ENCODE measurements at regions of chr4 and their contacts with region 1.

Region 1: GRCh38 chr4:47463235-47463956 is at the start of gene COMMD8:
- DNase-seq: peak; percentile 96 to 98 (median 97)
- H3K4me3 ChIP-seq: peak within 1 kb of the TSS; percentile 48 to 92
- H3K4me3 Mint-ChIP-seq: peak within 1 kb of the TSS; percentile 88 to 92 (median 90)
- H3K27ac ChIP-seq: peak within 1 kb of the TSS; percentile 79
- H3K27ac Mint-ChIP-seq: peak within 1 kb of the TSS; percentile 90 to 99 (median 96)
- H3K4me1 ChIP-seq: peaks cover 24% of the 10 kb centered on the region
- H3K4me1 Mint-ChIP-seq: peaks cover 26 to 42% (median 36%) of the 10 kb centered on the region in 4 donors
- H3K27me3 ChIP-seq: no peaks in the 10 kb centered on the region
- H3K27me3 Mint-ChIP-seq: peaks cover 0 to 2% of the 10 kb centered on the region in 2 donors
- total RNA-seq, gene COMMD8: 14.6 to 18.3 TPM

Region 2: GRCh38 chr4:47349326-47349725 is 114.1 kb before region 1 on chr4:
- CTCF ChIA-PET with region 1: no interaction called
- POLR2A ChIA-PET with region 1: no interaction called
- intact Hi-C with region 1: no loop called
- DNase-seq: no peak
- H3K4me3 ChIP-seq: no peak overlapping the region
- H3K4me3 Mint-ChIP-seq: no peak overlapping the region
- H3K27ac ChIP-seq: no peak overlapping the region
- H3K27ac Mint-ChIP-seq: no peak overlapping the region
- H3K4me1 ChIP-seq: no peaks in the 10 kb centered on the region
- H3K4me1 Mint-ChIP-seq: no peaks in the 10 kb centered on the region
- H3K27me3 ChIP-seq: no peaks in the 10 kb centered on the region
- H3K27me3 Mint-ChIP-seq: peaks cover 3 to 11% of the 10 kb centered on the region in 2 donors

Region 3: GRCh38 chr4:47485047-47485692 is 21.8 kb after region 1 on chr4 and contains the start of gene ATP10D:
- CTCF ChIA-PET with region 1: interaction called, 19 read pairs
- POLR2A ChIA-PET with region 1: interaction called, 21 read pairs
- intact Hi-C with region 1: loop called (anchors 1 kb)
- DNase-seq: peak; percentile 65 to 75 (median 67)
- H3K4me3 ChIP-seq: peak within 1 kb of the TSS; percentile 58 to 86
- H3K4me3 Mint-ChIP-seq: peak within 1 kb of the TSS; percentile 90 to 99 (median 95)
- H3K27ac ChIP-seq: peak within 1 kb of the TSS; percentile 46
- H3K27ac Mint-ChIP-seq: peak within 1 kb of the TSS; percentile 74 to 98 (median 94)
- H3K4me1 ChIP-seq: peaks cover 14% of the 10 kb centered on the region
- H3K4me1 Mint-ChIP-seq: peaks cover 7 to 32% (median 25%) of the 10 kb centered on the region in 4 donors
- H3K27me3 ChIP-seq: no peaks in the 10 kb centered on the region
- H3K27me3 Mint-ChIP-seq: no peaks in the 10 kb centered on the region
- total RNA-seq, gene ATP10D: 3.1 to 4.2 TPM

Region 4: GRCh38 chr4:47531241-47531953 is 68.0 kb after region 1 on chr4:
- CTCF ChIA-PET with region 1: no interaction called
- POLR2A ChIA-PET with region 1: interaction called, 12 read pairs
- intact Hi-C with region 1: loop called (anchors 1 kb)
- DNase-seq: peak; percentile 50 to 70 (median 61)
- H3K4me3 ChIP-seq: no peak overlapping the region
- H3K4me3 Mint-ChIP-seq: peak overlapping the region in 7 of 8 donors; percentile 18 to 82 (median 72)
- H3K27ac ChIP-seq: no peak overlapping the region
- H3K27ac Mint-ChIP-seq: peak overlapping the region in 6 of 7 donors; percentile 56 to 88 (median 76)
- H3K4me1 ChIP-seq: peaks cover 40% of the 10 kb centered on the region
- H3K4me1 Mint-ChIP-seq: peaks cover 35 to 47% (median 43%) of the 10 kb centered on the region in 4 donors
- H3K27me3 ChIP-seq: no peaks in the 10 kb centered on the region
- H3K27me3 Mint-ChIP-seq: no peaks in the 10 kb centered on the region

Region 5: DNA sequence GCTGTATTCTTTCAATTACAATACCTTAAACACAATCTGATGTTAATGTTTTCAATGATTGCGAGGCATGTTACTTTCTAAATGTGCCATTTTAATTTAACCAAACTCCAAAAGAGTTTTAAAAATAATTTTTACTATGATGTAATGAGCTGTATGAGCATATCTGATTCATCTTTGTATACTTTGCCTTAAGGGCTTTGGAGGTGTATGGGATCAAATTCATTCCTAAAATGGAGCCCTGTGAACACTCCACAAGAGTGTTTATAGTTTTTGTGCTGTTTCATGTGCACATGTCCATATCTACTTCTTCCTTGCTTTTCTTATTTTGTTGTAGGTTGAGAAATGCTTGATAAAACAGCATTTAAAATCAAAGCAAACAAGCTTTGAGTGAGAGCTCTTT is 104.1 kb after region 1 on chr4:
- CTCF ChIA-PET with region 1: interaction called, 23 read pairs
- POLR2A ChIA-PET with region 1: no interaction called
- intact Hi-C with region 1: loop called (anchors 1 kb)
- DNase-seq: no peak
- H3K4me3 ChIP-seq: no peak overlapping the region
- H3K4me3 Mint-ChIP-seq: no peak overlapping the region
- H3K27ac ChIP-seq: no peak overlapping the region
- H3K27ac Mint-ChIP-seq: no peak overlapping the region
- H3K4me1 ChIP-seq: peaks cover 5% of the 10 kb centered on the region
- H3K4me1 Mint-ChIP-seq: peaks cover 2 to 9% (median 4%) of the 10 kb centered on the region in 4 donors
- H3K27me3 ChIP-seq: no peaks in the 10 kb centered on the region
- H3K27me3 Mint-ChIP-seq: no peaks in the 10 kb centered on the region

Region 6: DNA sequence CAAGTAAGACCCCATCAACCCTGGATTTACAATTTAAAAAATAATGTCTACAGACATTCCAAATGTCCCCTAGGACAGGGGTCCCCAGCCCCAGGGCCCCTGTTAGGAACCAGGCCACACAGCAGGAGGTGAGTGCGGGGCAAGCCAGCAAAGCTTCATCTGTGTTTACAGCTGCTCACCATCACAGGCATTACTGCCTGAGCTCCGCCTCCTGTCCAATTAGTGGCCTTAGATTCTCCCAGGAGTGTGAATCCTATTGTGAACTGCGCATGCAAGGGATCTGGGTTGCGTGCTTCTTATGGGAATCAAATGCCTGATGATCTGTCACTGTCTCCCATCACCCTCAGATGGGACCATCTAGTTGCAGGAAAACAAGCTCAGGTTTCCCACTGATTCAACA is 167.8 kb after region 1 on chr4:
- CTCF ChIA-PET with region 1: no interaction called
- POLR2A ChIA-PET with region 1: no interaction called
- intact Hi-C with region 1: no loop called
- DNase-seq: no peak
- H3K4me3 ChIP-seq: no peak overlapping the region
- H3K4me3 Mint-ChIP-seq: no peak overlapping the region
- H3K27ac ChIP-seq: no peak overlapping the region
- H3K27ac Mint-ChIP-seq: no peak overlapping the region
- H3K4me1 ChIP-seq: no peaks in the 10 kb centered on the region
- H3K4me1 Mint-ChIP-seq: no peaks in the 10 kb centered on the region
- H3K27me3 ChIP-seq: no peaks in the 10 kb centered on the region
- H3K27me3 Mint-ChIP-seq: peaks cover 3 to 6% of the 10 kb centered on the region in 2 donors

Measured in CD4-positive, alpha-beta memory T cell (primary cell).